Panc1 (cell line): ENCODE measurements at regions of chr3 and their contacts with region 1.

Region 1: DNA sequence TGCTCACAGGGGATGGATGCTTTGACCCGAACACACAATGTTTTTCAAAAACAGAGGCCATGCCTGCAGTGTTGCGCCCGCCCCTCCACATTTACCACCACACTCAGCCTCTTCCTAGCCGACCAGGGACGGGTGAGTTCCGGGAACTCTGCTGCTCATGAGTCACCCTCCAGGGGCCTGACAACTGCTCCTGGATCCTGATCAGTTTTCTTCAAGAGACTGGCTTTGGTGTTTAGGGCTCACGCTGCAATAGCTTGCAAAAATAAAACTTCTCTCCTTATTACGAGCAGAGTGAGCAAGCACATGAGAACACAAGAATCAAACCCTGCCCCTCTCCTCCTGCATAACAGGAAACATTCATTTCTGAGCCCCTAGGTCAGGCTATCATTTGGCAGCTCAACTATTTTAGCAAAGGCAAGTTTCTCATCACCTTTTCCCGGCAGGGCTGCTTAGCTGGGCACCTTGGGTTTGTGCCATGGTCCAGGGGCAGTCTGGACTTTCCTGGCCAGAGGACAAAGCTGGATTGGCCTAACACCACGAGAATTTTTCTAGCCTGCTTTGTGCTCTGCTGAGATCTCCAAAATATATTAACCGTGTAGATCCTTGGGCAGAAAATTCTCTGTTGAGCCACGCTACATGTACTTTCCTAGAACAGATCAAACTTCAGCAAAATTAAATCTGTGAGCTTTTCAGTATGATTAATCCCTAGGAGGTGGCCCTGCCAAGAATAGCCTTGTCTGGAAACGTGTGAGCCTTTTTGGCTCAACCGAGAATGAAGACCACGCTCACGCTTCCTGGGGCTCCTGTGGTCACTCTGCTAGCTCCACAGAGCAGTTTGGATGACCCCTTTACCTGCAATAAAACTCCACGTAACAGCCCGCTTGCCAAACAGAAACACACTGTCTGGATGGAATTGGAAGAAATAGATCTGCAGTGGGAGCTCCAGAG is 52.7 kb upstream of the SPATA12 start:
- DNase-seq: no peak
- ATAC-seq: peak; percentile 92
- H3K4me3 ChIP-seq: peak overlapping the region in 1 of 2 experiments; percentile 16; a peak in 1 of 4 replicates
- H3K27ac ChIP-seq: peak overlapping the region; percentile 54; the same call in 1 of the 2 replicates
- H3K4me1 ChIP-seq: peaks cover 12% of the 10 kb centered on the region
- H3K27me3 ChIP-seq: no peaks in the 10 kb centered on the region
- CTCF ChIP-seq: no peak

Region 2: GRCh38 chr3:56894881-56895431 is 112.8 kb before region 1 on chr3:
- CTCF ChIA-PET with region 1: no interaction called
- POLR2A ChIA-PET with region 1: no interaction called
- in situ Hi-C with region 1: no loop called
- intact Hi-C with region 1: no loop called
- DNase-seq: no peak
- ATAC-seq: no peak
- H3K4me3 ChIP-seq: no peak overlapping the region
- H3K27ac ChIP-seq: no peak overlapping the region
- H3K4me1 ChIP-seq: no peaks in the 10 kb centered on the region
- H3K27me3 ChIP-seq: no peaks in the 10 kb centered on the region
- CTCF ChIP-seq: no peak

Region 3: DNA sequence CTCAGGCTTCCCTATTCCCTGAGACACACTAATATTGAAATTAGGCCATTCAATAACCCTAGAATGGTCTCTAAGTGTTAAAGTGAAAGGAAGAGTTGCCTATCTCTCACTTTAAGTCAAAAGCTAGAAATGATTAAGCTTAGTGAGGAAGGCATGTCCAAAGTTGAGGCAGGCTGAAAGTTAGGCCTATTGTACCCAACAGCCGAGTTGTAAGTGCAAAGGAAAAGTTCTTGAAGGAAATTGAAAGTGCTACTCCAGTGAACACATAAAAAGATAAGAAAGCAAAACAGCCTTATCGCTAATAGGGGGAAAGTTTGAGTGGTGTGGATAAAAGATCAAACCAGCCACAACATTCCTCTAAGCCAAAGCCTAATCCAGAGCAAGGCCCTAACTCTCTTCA is 65.3 kb before region 1 on chr3:
- CTCF ChIA-PET with region 1: no interaction called
- POLR2A ChIA-PET with region 1: no interaction called
- in situ Hi-C with region 1: no loop called
- intact Hi-C with region 1: no loop called
- DNase-seq: no peak
- ATAC-seq: no peak
- H3K4me3 ChIP-seq: no peak overlapping the region
- H3K27ac ChIP-seq: no peak overlapping the region
- H3K4me1 ChIP-seq: no peaks in the 10 kb centered on the region
- H3K27me3 ChIP-seq: no peaks in the 10 kb centered on the region
- CTCF ChIP-seq: no peak

Region 4: GRCh38 chr3:57060089-57060829 is 52.5 kb after region 1 on chr3 and contains the start of gene SPATA12:
- CTCF ChIA-PET with region 1: no interaction called
- POLR2A ChIA-PET with region 1: no interaction called
- in situ Hi-C with region 1: no loop called
- intact Hi-C with region 1: loop called (anchors 5 kb)
- DNase-seq: peak; percentile 75
- ATAC-seq: peak; percentile 99
- H3K4me3 ChIP-seq: peak within 1 kb of the TSS in 1 of 2 experiments; percentile 42; a peak in 2 of 4 replicates
- H3K27ac ChIP-seq: peak within 1 kb of the TSS; percentile 82
- H3K4me1 ChIP-seq: peaks cover 31% of the 10 kb centered on the region
- H3K27me3 ChIP-seq: no peaks in the 10 kb centered on the region
- CTCF ChIP-seq: no peak
- total RNA-seq, gene SPATA12: 0.10 TPM

Region 5: DNA sequence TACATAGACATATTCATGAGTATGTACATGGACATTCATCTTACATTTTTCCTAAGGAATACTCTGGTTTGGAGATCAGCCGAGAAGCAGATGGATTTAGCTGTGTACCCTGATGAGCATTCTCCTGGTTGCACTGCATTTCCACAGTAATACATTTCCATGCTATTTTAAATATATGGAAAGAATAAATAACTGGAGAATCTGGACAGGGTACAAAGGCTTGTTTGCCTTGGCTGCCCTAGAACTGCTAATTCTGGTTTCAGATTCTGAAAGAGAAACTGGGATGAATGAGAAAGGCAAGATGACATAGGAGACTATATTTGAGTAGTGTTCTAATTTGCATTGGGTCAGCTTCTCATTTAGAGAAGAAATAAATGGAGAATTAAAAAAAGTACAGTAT is 1849.6 kb after region 1 on chr3:
- CTCF ChIA-PET with region 1: no interaction called
- POLR2A ChIA-PET with region 1: no interaction called
- in situ Hi-C with region 1: no loop called
- intact Hi-C with region 1: no loop called
- DNase-seq: no peak
- ATAC-seq: no peak
- H3K4me3 ChIP-seq: no peak overlapping the region
- H3K27ac ChIP-seq: no peak overlapping the region
- H3K4me1 ChIP-seq: no peaks in the 10 kb centered on the region
- H3K27me3 ChIP-seq: no peaks in the 10 kb centered on the region
- CTCF ChIP-seq: no peak